ENCODE measurements at regions of chr12 and their contacts with region 1.

Region 1: DNA sequence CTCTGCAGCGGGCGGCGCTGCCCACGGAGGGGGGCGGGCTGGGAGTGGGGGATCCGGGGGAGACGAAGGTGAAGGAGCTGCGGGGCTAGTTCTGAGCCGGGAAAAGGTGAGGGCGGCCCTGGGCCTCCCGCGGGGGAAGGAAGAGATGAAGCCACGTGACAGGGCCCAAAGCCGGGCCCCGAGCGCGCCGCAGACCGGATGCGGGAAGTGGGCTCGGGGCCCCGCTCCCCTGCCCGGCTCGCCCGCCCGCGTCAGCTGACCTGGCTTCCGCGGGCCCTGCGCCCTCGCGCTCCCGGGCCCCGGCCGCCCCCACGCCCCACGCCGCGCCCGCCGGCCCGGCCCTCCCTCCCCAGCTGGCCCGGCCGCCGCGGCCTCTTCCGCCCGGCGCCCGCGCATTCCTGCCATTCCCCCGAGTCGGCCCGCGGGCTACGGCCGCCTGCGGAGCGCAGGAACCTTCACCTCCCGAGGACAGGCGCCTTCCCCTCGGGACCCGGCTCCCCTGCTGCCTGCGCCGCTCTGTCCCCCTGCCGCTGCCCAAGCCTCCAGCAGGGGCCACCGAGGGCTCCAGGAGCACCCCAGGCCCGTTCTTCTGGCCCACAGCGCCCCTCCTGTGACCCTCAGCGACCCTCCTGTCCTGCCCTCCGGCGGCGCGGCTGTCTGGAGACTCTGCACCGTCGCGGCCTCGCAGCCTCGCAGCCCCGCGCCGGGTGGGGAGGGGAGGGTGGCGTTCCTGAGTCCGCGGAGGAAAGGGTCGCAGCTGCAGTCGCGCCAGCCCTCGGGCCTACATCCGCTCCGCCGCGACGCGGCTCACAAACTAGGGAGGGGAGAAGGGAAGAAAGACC is 20.4 kb downstream of the NINJ2 start:
- DNase-seq: peak; percentile 79 to 85 (median 83)
- H3K4me3 ChIP-seq: peak overlapping the region; percentile 25 to 76
- H3K4me3 Mint-ChIP-seq: peak overlapping the region; percentile 90 to 94 (median 91)
- H3K27ac ChIP-seq: peak overlapping the region; percentile 89
- H3K27ac Mint-ChIP-seq: peak overlapping the region; percentile 93 to 99 (median 96)
- H3K4me1 ChIP-seq: peaks cover 63% of the 10 kb centered on the region
- H3K4me1 Mint-ChIP-seq: peaks cover 39 to 71% (median 59%) of the 10 kb centered on the region in 4 donors
- H3K27me3 ChIP-seq: no peaks in the 10 kb centered on the region
- H3K27me3 Mint-ChIP-seq: no peaks in the 10 kb centered on the region

Region 2: DNA sequence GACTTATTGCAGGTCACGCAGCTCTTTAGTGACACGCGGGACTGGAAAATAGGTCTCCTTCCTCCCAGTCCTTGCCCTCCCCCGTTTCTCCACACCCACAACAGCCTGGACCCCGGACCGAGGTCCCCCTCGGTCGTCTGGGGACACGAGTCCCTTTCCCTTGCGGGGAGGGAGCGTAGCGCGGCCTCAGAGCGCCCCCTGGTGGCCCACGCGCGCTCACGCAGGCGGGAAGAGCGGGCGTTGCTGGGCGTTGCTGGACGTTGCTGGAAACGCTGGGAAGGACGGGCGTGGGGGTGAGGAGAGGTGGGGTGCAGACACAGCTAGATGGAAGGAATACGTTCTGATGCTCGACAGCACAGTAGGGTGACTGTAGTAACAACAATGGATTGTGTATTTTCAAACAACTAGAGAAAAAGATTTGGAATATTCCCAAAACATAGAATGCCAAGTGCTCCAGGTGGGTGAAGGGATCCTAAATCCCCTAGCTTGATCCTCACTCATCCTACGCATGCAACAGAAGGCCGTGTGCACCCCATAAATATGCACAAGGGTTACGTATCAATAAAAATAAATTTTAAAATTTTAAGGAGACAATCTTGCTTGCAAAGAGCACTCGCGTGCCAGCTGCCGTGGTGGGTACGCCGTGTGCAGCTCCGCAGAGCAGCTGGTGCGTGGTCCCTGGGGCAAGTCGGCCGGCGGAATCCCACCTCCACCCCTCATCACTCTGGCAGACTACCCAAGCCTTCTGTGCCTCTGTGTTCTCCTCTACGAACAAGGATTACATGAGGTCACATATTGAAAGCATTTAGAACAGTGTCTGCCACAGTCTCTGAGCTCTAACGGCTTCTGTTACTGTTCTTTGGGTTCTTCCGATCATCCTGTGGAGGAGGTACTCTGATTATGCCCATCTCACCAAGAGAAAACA is 95.7 kb before region 1 on chr12:
- CTCF ChIA-PET with region 1: no interaction called
- POLR2A ChIA-PET with region 1: no interaction called
- intact Hi-C with region 1: no loop called
- DNase-seq: peak in 4 of 5 donors; percentile 52 to 70 (median 60)
- H3K4me3 ChIP-seq: no peak overlapping the region
- H3K4me3 Mint-ChIP-seq: peak overlapping the region in 1 of 8 donors; percentile 5
- H3K27ac ChIP-seq: no peak overlapping the region
- H3K27ac Mint-ChIP-seq: peak overlapping the region in 2 of 7 donors; percentile 42
- H3K4me1 ChIP-seq: peaks cover 14% of the 10 kb centered on the region
- H3K4me1 Mint-ChIP-seq: peaks cover 12 to 28% (median 21%) of the 10 kb centered on the region in 4 donors
- H3K27me3 ChIP-seq: no peaks in the 10 kb centered on the region
- H3K27me3 Mint-ChIP-seq: peaks cover 5 to 8% of the 10 kb centered on the region in 2 donors

Region 3: DNA sequence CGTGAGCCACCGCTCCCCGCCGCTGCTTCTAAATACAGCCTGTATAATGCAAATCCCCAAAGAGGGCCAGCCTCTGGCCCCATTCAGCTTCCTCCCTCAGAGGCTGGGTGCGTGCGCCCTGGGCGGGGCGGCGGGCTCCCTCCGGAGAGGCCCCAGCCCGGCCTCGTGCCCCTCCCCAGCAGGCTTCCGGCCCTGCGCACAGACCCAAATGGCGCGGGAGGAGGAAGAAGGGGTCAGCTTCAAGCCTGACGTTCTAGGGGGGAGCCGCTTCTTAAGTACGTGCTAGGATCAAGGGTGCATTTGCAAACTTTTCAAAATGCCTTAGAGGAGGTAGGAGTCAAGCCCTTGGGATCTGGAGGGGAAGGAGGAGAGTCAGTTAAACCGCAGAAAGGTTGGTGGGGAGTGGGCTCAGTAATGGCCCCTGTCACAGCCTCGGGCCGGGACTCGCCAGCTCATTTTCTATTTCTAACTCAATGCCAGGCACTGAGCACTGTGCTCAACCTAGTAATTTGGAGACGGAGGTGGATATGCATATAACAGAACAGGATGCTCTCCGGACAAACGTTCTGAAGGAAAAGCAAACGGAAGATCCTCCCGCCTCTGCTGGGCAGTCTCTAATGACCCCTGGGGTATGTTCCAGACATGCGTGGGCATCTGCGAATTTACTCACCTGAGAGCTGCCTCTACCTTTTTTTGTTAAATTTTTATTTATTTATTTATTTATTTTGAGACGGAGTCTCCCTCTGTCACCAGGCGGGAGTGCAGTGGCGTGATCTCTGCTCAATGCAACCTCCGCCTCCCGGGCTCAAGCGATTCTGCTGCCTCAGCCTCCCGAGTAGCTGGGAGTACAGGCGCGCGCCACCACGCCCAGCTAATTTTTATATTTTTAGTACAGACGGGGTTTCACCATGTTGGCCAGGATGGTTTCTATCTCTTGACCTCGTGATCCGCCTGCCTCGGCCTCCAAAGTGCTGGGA is 11.9 kb before region 1 on chr12:
- CTCF ChIA-PET with region 1: interaction called, 5 read pairs
- POLR2A ChIA-PET with region 1: interaction called, 46 read pairs
- intact Hi-C with region 1: no loop called
- DNase-seq: peak in 3 of 5 donors; percentile 66 to 81 (median 68)
- H3K4me3 ChIP-seq: peak overlapping the region in 1 of 2 donors; percentile 68
- H3K4me3 Mint-ChIP-seq: peak overlapping the region in 6 of 8 donors; percentile 92 to 98 (median 93)
- H3K27ac ChIP-seq: peak overlapping the region; percentile 76
- H3K27ac Mint-ChIP-seq: peak overlapping the region in 5 of 7 donors; percentile 86 to 99 (median 95)
- H3K4me1 ChIP-seq: peaks cover 15% of the 10 kb centered on the region
- H3K4me1 Mint-ChIP-seq: peaks cover 4 to 28% (median 18%) of the 10 kb centered on the region in 4 donors
- H3K27me3 ChIP-seq: no peaks in the 10 kb centered on the region
- H3K27me3 Mint-ChIP-seq: no peaks in the 10 kb centered on the region

Region 4: DNA sequence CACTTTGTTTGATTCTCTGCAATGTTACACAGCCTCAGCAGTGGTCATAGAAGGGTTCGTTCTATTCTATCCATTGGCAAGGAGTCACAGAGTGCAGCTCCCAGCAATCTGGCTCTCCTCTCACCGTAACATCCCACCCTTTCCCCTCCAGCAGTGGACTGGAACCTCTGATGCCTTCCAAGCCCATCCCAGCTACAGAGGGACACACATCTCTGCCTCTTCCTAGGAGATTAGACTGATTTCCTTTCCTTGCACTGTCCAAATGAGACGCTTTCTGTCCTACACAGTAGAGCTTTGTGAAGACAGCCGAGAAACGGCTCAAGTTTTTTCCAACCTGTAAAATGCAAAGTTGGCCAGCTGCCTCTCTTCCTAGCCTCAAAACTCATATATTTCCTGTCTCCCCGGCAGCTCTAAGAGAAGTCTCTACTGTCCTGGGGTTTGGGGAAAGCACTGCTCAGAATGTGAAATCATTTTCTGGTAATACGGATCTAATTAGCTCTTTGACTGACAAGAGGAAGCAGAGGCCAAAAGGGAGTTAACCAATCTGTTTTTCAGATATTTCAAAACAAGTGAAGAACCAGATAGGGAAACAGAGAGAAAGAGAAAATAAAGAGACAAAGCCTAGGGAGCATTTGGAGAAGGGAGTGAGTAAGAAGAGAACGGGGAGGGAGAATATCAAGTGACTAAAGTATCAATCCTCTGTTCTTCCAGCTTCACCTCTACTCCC is 19.9 kb after region 1 on chr12:
- CTCF ChIA-PET with region 1: interaction called, 6 read pairs
- POLR2A ChIA-PET with region 1: interaction called, 10 read pairs
- intact Hi-C with region 1: no loop called
- DNase-seq: no peak
- H3K4me3 ChIP-seq: peak overlapping the region in 1 of 2 donors; percentile 16
- H3K4me3 Mint-ChIP-seq: peak overlapping the region; percentile 80 to 93 (median 86)
- H3K27ac ChIP-seq: peak overlapping the region; percentile 49
- H3K27ac Mint-ChIP-seq: peak overlapping the region; percentile 14 to 95 (median 90)
- H3K4me1 ChIP-seq: peaks cover 50% of the 10 kb centered on the region
- H3K4me1 Mint-ChIP-seq: peaks cover 29 to 58% (median 48%) of the 10 kb centered on the region in 4 donors
- H3K27me3 ChIP-seq: no peaks in the 10 kb centered on the region
- H3K27me3 Mint-ChIP-seq: no peaks in the 10 kb centered on the region

Region 5: GRCh38 chr12:674272-674781 is 31.5 kb after region 1 on chr12:
- CTCF ChIA-PET with region 1: no interaction called
- POLR2A ChIA-PET with region 1: interaction called, 18 read pairs
- intact Hi-C with region 1: no loop called
- DNase-seq: peak; percentile 77 to 91 (median 83)
- H3K4me3 ChIP-seq: peak overlapping the region; percentile 27 to 44
- H3K4me3 Mint-ChIP-seq: peak overlapping the region; percentile 67 to 91 (median 84)
- H3K27ac ChIP-seq: peak overlapping the region; percentile 70
- H3K27ac Mint-ChIP-seq: peak overlapping the region; percentile 93 to 100 (median 99)
- H3K4me1 ChIP-seq: peaks cover 61% of the 10 kb centered on the region
- H3K4me1 Mint-ChIP-seq: peaks cover 36 to 67% (median 53%) of the 10 kb centered on the region in 4 donors
- H3K27me3 ChIP-seq: no peaks in the 10 kb centered on the region
- H3K27me3 Mint-ChIP-seq: no peaks in the 10 kb centered on the region

Region 6: DNA sequence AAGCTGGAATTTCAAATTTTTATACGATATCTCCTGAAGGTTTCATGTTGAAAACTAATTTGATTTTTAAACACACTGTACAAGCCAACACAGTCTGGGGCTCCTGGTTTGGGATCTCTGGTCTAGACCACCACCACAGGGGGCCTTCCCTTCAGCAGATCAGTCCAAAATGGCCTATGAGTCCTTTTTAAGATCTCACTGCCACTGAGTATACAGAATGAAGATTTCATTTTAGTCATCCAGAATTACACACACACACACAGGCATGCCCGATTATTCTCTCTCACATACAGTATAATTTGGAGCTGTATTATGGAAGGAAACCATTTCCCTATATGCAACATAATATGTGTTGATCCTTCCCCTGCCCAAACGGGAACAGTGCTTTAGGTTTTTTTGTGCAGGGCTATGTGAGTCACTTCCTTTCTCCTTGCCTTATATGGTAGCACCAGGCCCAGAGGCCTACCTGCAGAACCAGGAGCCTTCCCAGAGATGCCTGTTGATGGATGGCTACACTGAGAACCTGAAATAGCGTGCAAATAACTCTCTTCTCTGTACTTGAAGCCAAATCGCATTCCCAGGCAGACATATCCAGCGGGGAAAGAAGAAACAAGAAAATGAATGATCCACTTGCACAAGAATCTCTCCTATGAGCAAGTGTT is 81.5 kb after region 1 on chr12:
- CTCF ChIA-PET with region 1: no interaction called
- POLR2A ChIA-PET with region 1: interaction called, 16 read pairs
- intact Hi-C with region 1: no loop called
- DNase-seq: peak in 1 of 5 donors; percentile 20
- H3K4me3 ChIP-seq: no peak overlapping the region
- H3K4me3 Mint-ChIP-seq: peak overlapping the region in 6 of 8 donors; percentile 1 to 49 (median 32)
- H3K27ac ChIP-seq: peak overlapping the region; percentile 34
- H3K27ac Mint-ChIP-seq: peak overlapping the region; percentile 59 to 93 (median 85)
- H3K4me1 ChIP-seq: peaks cover 61% of the 10 kb centered on the region
- H3K4me1 Mint-ChIP-seq: peaks cover 46 to 82% (median 65%) of the 10 kb centered on the region in 4 donors
- H3K27me3 ChIP-seq: no peaks in the 10 kb centered on the region
- H3K27me3 Mint-ChIP-seq: no peaks in the 10 kb centered on the region

Region 7: DNA sequence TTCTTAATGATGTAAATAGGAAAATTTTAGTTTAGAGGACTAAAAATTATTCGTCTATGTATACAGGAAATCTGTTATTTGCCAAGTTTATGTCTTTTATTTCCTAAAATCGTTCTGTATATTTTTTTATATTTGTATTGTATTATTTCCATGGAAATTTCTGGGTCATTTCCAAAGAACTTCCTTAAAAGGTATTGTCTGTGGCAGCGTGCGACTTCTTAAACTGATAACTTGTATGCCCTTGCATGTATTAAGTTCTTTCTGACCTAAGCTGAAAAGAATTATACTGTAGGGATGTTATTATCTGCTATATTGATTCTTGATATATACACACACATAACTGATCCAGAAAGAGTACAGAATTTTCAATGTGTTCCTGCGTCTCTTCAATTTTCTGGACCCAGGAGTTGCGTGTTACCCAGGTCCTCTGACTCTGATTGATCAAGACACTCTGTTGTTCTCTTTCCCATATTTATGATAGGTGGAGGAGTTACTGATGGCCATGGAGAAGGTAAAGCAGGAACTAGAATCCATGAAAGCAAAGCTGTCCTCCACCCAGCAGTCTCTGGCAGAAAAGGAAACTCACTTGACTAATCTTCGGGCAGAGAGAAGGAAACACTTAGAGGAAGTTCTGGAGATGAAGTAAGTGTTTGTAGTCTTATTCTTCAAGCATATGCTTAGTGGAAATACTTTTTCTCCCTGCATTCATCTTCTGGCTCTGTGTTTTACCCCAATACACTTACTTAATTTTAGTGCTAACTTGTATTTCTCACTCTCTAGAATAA is 646.7 kb after region 1 on chr12:
- CTCF ChIA-PET with region 1: no interaction called
- POLR2A ChIA-PET with region 1: no interaction called
- intact Hi-C with region 1: no loop called
- DNase-seq: no peak
- H3K4me3 ChIP-seq: no peak overlapping the region
- H3K4me3 Mint-ChIP-seq: no peak overlapping the region
- H3K27ac ChIP-seq: no peak overlapping the region
- H3K27ac Mint-ChIP-seq: no peak overlapping the region
- H3K4me1 ChIP-seq: no peaks in the 10 kb centered on the region
- H3K4me1 Mint-ChIP-seq: no peaks in the 10 kb centered on the region
- H3K27me3 ChIP-seq: no peaks in the 10 kb centered on the region
- H3K27me3 Mint-ChIP-seq: no peaks in the 10 kb centered on the region